ENCODE measurements at regions of chr1 and their contacts with region 1.

Region 1: DNA sequence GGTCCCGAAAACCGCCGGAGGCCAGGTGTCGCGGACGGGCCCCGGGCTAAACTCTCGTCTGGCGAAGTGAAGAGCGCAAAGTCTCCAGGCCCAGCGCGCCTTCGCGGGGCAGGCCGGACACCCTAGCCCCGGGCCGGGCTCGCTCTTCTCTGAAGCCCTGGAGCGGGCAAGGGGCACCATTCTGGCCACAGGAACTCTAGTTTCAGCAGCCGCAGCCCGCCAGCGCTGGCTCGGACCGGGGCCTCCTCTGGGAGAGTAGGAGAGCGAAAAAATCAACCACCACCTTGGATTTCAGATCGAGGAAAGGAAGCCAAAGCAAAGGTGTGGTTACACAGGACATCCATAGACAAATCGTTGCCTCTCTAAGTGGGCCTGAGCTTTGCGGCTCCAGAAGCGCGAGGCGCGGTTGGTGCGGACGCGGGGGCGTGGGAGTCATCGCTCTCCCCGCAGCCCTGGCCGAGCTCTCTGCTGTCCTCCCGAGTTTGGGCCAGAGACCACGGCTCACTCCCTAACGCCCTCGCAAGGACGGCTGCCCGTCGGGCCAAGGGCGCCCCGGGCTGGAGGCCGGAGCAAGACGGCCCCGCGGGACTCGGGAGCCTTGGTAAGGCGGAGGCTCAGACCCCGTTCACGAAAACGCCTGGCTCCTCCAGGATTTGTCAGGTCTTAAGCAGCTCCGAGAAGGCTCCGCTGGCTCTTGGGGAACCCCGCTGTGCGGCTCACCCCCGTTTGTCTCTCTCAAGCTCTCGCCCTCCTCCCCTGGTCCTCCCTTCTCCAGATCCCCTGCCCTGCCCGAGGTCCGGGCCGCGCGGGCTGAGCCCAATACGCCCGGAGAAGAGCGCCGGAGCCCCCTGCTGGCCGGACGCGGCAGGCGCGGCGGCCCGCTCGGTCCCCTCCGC is 132.9 kb upstream of the DPYD start:
- DNase-seq: peak; percentile 79
- ATAC-seq: peak; percentile 97

Region 2: DNA sequence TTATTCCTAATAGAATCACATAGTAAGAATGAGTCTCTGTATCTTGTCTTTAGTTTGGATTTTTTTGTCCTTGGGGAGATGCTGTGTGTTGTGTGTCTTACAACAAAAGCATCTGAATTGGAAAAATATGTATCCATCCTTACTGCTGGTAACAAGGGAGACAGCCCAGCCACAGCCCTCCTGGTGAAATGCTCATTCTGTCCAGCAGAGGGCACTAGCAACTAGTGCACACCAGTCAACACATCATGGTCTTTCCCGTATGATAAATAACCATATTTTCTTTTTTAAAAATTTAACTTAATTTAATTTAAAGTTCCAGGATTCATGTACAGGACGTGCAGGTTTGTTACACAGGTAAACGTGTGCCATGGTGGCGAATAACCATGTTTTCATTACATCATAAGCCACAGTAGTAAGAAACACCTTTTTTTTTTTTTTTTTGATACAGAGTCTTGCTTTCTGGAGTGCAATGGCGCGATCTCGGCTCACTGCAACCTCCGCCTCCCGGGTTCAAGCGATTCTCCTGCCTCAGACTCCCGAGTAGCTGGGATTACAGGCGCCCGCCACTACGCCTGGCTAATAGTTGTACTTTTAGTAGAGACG is 1087.1 kb before region 1 on chr1:
- intact Hi-C with region 1: loop called (anchors 5 kb)
- DNase-seq: peak; percentile 70
- ATAC-seq: peak; percentile 72

Region 3: DNA sequence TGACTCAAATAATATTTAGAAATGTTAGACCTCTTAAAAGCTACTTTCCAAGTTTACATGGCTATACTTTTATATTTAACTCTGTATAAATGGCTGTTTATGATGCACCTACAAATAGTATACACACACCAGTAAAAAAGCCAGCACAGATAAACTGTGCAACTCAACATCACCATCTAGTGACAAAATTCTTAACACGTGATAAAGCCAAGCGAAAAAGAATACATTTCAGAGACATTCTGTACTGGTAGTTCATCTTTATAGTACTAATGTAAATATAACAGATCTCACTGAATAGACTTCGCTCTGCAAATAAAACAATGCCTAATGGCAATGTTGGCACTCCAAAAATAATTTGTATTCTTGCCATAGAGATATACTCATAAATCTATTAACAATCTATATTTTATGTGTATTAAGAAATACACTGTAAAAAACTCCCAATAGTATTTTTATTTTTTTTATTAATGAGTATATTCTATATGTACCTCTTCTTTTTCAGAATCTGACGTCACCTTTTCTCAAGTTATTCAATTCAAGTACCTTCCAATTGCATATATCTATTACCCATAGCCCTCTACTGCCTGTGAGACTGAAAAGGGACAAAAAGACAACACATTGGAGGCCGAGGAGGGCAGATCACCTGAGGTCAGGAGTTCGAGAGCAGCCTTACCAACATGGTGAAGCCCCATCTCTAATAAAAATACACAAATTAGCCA is 233.1 kb before region 1 on chr1:
- intact Hi-C with region 1: loop called (anchors 5 kb)
- DNase-seq: no peak
- ATAC-seq: no peak

Region 4: GRCh38 chr1:97960470-97960869 is 93.2 kb before region 1 on chr1:
- intact Hi-C with region 1: no loop called
- DNase-seq: no peak
- ATAC-seq: no peak

Region 5: DNA sequence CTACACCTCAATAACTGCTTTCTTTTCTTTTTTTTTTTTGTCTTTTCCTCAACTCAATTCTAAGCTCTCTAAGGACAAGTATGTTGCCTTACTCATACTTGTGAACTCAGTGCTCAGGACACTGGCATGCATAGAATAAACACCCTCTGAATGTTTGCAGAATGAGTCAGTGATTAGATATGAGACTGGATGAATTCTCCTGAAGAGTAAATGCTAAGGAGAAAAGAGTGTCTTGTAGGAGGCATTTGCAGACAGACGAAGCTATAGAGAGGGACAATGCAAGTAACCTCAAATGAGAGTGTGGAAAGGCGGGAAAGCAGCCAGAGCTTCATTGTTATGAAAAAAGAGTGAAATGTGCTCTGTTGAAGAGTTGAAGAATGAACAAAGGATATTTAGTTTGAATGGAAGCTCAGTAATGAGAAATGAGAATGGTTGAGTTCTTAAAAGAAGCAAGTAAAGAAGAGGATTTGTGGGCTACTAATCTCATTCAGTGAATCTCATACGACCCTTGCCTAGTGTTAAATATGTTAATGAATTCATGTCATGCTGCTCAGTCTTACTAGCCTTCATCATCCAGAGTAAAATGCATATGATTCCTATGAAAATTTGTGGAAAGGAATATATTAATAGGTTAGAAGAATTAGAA is 33.2 kb after region 1 on chr1:
- intact Hi-C with region 1: no loop called
- DNase-seq: no peak
- ATAC-seq: no peak

Region 6: GRCh38 chr1:98110674-98111073 is 57.0 kb after region 1 on chr1:
- intact Hi-C with region 1: no loop called
- DNase-seq: no peak
- ATAC-seq: no peak

Measured in Right ventricle myocardium inferior (tissue), 1 donor.